ENCODE measurements at regions of chr14 and their contacts with region 1.

Region 1: DNA sequence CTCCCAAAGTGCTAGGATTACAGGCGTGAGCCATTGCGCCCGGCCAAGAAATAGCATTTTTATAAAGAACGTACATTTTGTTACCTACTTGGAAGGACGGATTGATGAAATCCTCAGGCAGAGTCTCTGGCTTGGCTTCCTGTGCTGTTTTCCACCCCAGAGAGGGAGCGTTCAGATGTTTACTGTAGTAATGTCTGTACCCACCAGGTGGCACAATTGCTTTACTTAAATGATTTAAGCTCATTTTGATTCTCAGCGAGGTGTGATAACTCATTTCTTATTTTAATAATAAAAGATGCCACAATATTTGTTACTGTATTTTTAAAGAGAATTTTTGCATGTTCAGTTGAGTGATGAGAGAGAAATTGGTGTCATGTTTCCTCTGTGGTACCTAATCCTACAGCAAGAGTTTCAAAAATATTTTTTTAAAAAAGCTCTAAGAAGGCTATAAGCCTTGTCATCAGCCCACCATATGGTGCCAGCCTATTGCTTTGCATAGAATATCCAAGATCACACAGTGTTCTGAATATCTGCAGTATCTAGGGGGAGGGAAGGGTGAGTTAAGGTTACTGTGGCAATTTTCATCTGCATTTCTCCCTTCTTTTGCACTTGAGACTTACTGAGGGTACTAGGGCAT is 82.6 kb upstream of the TRAF3 start:
- DNase-seq: peak; percentile 32 to 64
- ATAC-seq: peak; percentile 44

Region 2: GRCh38 chr14:102917469-102918211 is 223.0 kb after region 1 on chr14:
- intact Hi-C with region 1: loop called in 1 of 2 experiments (anchors 10 kb)
- DNase-seq: peak in 1 of 2 donors; percentile 84
- ATAC-seq: no peak

Measured in left colon (tissue), 2 donors.